Breast epithelium (tissue), 4 donors: ENCODE measurements at regions of chr9 and their contacts with region 1.

Region 1: GRCh38 chr9:10999646-11000045 is 386.8 kb upstream of the PTPRD start:
- DNase-seq: no peak
- H3K4me3 ChIP-seq: no peak overlapping the region
- H3K27ac ChIP-seq: no peak overlapping the region
- H3K4me1 ChIP-seq: no peaks in the 10 kb centered on the region
- H3K27me3 ChIP-seq: no peaks in the 10 kb centered on the region
- CTCF ChIP-seq: no peak
- POLR2A ChIP-seq: no peak

Region 2: DNA sequence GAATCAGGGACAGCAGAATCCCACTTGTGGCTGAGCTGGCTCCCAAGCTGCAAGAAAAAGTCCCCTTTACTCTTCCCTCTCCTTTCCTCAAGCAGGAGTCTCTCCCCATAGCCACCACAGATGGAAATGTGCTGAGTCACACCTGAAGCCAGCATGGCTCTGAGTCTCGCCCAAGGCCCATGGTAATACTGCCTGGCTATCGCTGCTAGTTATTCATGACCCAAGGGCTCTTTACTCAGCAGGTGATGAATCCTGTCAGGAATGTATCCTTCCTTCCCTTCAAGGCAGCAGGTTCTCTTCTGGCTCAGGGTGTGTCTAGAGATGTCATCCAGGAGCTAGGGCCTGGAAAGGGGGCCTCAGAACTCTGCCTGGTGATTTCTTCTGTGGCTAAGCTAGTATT is 16.4 kb after region 1 on chr9:
- intact Hi-C with region 1: loop called (anchors 2 kb)
- DNase-seq: no peak
- H3K4me3 ChIP-seq: no peak overlapping the region
- H3K27ac ChIP-seq: no peak overlapping the region
- H3K4me1 ChIP-seq: no peaks in the 10 kb centered on the region
- H3K27me3 ChIP-seq: no peaks in the 10 kb centered on the region
- CTCF ChIP-seq: no peak
- POLR2A ChIP-seq: no peak

Region 3: GRCh38 chr9:11471321-11471720 is 471.7 kb after region 1 on chr9:
- intact Hi-C with region 1: no loop called
- DNase-seq: no peak
- H3K4me3 ChIP-seq: no peak overlapping the region
- H3K27ac ChIP-seq: no peak overlapping the region
- H3K4me1 ChIP-seq: no peaks in the 10 kb centered on the region
- H3K27me3 ChIP-seq: no peaks in the 10 kb centered on the region
- CTCF ChIP-seq: no peak
- POLR2A ChIP-seq: no peak